RWPE1 (cell line): ENCODE measurements at regions of chr5 and their contacts with region 1.

Region 1: GRCh38 chr5:137075163-137075970 is 423.8 kb downstream of the SPOCK1 start:
- DNase-seq: peak; percentile 93
- H3K27ac ChIP-seq: no peak overlapping the region
- CTCF ChIP-seq: peak; percentile 83

Region 2: DNA sequence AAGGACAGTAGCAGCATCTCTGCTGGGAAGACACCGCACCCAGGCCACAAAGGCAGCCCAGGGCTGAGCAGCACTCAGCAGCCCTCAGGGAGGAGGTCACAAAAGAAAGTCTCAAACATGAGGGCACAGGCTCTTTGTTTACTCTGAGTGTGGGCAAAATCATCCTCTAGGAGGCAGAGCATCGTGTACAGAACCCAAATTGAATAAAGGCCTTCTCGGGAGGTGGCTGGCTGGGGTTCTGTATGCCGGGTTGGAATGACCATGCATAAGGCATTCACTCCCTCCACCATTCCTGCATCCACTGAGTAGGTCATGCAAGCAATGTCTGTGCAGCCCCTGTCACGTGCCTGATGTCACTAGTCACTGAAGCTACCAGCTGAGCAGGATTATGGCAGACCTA is 11.0 kb after region 1 on chr5:
- CTCF ChIA-PET with region 1: interaction called, 12 read pairs
- POLR2A ChIA-PET with region 1: no interaction called
- DNase-seq: no peak
- H3K27ac ChIP-seq: no peak overlapping the region
- CTCF ChIP-seq: no peak

Region 3: DNA sequence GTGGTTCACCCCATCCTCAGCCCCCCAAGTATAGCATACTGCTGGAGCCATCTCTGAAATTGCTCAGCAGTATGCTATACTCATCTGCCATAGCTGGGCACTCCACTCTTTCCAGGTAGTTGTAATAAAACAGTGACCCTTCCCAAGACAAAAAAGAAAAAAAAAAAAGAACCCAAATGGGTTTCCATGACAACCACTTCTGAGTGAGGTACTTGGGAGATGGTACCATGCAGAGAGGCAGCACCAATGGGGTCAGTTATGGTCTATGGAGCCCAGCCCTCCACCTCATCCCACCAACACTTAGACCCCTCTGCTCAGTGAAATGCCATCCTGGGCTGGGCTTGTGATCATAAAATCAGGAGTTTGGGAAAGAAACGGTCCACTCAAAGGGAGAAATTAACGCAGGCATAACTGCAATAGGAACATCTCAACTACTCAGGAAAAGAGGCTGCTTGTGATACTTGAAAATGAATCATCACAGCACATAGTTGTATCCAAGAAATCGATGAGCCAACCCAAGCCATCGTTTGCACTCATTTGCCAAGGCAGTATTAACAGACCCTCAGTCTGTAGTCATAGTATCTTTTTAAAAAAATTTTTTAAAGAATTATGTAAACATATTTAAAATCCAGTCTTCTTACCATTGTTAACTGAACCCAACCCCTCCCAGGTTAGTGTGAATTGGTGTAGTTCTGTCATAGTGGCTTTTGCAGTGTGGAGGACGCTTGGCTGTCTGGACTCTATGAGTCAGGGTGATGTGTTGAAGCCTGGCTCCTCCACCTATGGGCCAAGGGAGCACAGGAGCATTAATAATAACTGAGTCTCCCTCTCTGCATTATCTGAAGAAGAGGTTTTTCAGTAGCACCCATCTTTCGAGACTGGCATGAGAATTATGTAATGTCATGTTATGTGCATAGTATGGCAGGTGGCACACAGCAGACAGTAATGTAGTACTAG is 21.1 kb after region 1 on chr5:
- CTCF ChIA-PET with region 1: interaction called, 5 read pairs
- POLR2A ChIA-PET with region 1: interaction called, 11 read pairs
- DNase-seq: peak; percentile 49
- H3K27ac ChIP-seq: no peak overlapping the region
- CTCF ChIP-seq: no peak

Region 4: GRCh38 chr5:137218471-137218870 is 143.1 kb after region 1 on chr5:
- CTCF ChIA-PET with region 1: interaction called, 25 read pairs
- POLR2A ChIA-PET with region 1: no interaction called
- DNase-seq: peak; percentile 60
- H3K27ac ChIP-seq: no peak overlapping the region
- CTCF ChIP-seq: no peak